Psoas muscle (tissue), 8 donors: ENCODE measurements at regions of chr18 and their contacts with region 1.

Region 1: GRCh38 chr18:36809590-36810381 is 19.0 kb downstream of the TPGS2 start:
- DNase-seq: no peak
- ATAC-seq: peak; percentile 86 to 98 (median 92)
- H3K4me3 ChIP-seq: no peak overlapping the region
- H3K27ac ChIP-seq: no peak overlapping the region
- H3K4me1 ChIP-seq: no peaks in the 10 kb centered on the region
- H3K27me3 ChIP-seq: no peaks in the 10 kb centered on the region
- CTCF ChIP-seq: peak; percentile 86

Region 2: DNA sequence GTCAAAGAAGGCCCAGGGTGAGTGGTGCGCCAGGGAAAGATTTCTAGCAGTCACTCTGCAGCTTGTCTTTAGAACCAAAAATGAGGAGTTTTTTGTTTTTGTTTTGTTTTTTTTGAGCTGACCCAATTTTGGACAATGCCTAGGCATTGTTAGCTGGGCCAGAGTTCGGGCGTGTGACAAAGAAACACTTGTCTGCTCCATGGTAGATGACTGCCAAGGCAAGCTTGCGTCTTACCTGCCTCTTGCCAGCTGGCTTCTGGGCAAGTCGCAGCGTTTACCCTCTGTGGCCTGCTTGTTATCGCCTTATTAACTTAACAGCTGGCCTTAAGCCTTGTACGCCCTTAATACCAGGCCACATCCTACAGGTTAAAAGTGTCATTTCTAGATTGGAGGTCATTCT is 1114.0 kb before region 1 on chr18:
- intact Hi-C with region 1: no loop called
- DNase-seq: peak; percentile 19 to 67
- ATAC-seq: peak; percentile 80 to 96 (median 92)
- H3K4me3 ChIP-seq: no peak overlapping the region
- H3K27ac ChIP-seq: no peak overlapping the region
- H3K4me1 ChIP-seq: peaks cover 5% of the 10 kb centered on the region
- H3K27me3 ChIP-seq: no peaks in the 10 kb centered on the region
- CTCF ChIP-seq: no peak

Region 3: GRCh38 chr18:36688020-36688965 is 121.5 kb before region 1 on chr18:
- intact Hi-C with region 1: loop called (anchors 5 kb)
- DNase-seq: peak; percentile 36 to 68
- ATAC-seq: peak; percentile 80 to 85 (median 81)
- H3K4me3 ChIP-seq: no peak overlapping the region
- H3K27ac ChIP-seq: no peak overlapping the region
- H3K4me1 ChIP-seq: no peaks in the 10 kb centered on the region
- H3K27me3 ChIP-seq: no peaks in the 10 kb centered on the region
- CTCF ChIP-seq: peak; percentile 91

Region 4: GRCh38 chr18:36693931-36694620 is 115.7 kb before region 1 on chr18:
- intact Hi-C with region 1: loop called (anchors 5 kb)
- DNase-seq: no peak
- ATAC-seq: no peak
- H3K4me3 ChIP-seq: no peak overlapping the region
- H3K27ac ChIP-seq: no peak overlapping the region
- H3K4me1 ChIP-seq: no peaks in the 10 kb centered on the region
- H3K27me3 ChIP-seq: no peaks in the 10 kb centered on the region
- CTCF ChIP-seq: no peak

Region 5: DNA sequence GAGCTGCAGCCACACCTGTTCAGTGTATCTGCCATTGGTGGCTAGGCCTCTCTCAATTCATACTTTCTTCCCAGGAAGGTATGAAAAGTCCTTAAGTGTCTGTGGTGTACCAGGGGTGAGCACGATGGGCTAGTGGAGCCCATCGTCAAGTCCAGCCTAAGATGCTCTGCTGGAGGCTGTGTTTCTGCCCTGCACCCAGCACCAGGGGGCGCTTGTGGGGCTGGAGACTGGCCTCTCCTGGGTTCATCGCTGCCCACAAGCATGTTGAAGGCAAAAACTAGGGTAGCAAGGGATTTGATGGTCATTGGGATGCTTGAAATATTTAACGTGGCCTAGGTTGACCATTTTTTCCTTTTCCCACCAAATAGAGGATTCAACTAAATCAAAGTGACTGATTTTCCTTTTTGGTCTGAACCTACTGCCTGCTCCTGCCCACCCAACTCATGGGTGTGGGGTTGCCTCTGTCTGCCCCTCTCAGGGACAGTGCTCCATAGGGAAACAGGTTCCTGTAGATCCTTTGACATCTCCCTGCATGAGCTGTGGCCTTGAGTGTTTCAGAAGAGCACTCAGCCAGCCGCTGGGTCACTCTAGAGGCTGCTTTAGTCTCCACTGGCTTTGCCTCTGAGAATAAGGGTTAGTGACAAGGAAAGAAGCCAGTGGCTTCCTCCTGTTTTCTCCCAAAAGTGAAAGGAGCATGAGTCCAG is 40.0 kb before region 1 on chr18:
- intact Hi-C with region 1: loop called (anchors 1 to 2 kb)
- DNase-seq: peak; percentile 55 to 79
- ATAC-seq: peak; percentile 79 to 91 (median 82)
- H3K4me3 ChIP-seq: no peak overlapping the region
- H3K27ac ChIP-seq: no peak overlapping the region
- H3K4me1 ChIP-seq: no peaks in the 10 kb centered on the region
- H3K27me3 ChIP-seq: no peaks in the 10 kb centered on the region
- CTCF ChIP-seq: peak; percentile 67

Region 6: GRCh38 chr18:36934884-36935283 is 125.1 kb after region 1 on chr18:
- intact Hi-C with region 1: no loop called
- DNase-seq: no peak
- ATAC-seq: no peak
- H3K4me3 ChIP-seq: no peak overlapping the region
- H3K27ac ChIP-seq: no peak overlapping the region
- H3K4me1 ChIP-seq: no peaks in the 10 kb centered on the region
- H3K27me3 ChIP-seq: no peaks in the 10 kb centered on the region
- CTCF ChIP-seq: no peak